ENCODE measurements at regions of chr3 and their contacts with region 1.

Region 1: DNA sequence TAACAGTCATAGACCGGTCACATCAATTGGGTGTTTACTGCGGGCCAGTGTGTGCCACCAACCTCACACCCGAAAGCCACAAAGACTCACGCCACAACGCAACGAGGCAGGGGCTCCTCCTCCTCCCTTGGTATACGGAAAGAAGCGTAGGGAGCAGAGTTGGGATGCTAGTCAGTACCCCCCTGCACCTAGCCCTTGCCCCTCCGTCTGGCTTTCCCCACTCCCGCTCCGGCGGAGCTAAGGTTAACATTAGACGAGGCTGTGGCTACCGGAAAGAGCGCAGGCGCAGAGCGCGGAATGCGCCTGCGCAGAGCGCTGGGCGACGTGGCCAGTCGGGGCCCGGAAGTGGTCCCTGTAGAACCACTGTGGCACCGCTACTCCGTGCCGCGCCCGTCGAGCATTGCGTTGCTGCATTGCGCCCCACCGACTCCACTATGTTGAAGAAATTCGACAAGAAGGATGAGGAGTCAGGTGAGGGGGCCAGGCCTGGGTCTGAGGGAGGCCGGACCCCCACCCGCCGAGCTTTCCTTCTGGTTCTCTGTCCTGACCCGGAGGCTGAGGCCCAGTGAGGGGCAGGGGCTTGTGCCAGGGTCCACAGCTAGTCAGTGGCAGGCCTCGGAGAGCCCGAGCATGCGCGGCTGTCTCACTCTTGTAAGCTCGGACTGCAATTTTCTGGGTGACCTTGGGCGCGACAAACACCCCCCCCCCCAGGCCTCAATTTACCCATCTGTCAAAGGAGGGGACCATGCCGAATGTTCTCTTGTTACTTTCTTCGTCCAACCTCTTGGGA is at the start of gene COPG1:
- DNase-seq: peak; percentile 93
- total RNA-seq, gene COPG1: 122 TPM

Region 2: DNA sequence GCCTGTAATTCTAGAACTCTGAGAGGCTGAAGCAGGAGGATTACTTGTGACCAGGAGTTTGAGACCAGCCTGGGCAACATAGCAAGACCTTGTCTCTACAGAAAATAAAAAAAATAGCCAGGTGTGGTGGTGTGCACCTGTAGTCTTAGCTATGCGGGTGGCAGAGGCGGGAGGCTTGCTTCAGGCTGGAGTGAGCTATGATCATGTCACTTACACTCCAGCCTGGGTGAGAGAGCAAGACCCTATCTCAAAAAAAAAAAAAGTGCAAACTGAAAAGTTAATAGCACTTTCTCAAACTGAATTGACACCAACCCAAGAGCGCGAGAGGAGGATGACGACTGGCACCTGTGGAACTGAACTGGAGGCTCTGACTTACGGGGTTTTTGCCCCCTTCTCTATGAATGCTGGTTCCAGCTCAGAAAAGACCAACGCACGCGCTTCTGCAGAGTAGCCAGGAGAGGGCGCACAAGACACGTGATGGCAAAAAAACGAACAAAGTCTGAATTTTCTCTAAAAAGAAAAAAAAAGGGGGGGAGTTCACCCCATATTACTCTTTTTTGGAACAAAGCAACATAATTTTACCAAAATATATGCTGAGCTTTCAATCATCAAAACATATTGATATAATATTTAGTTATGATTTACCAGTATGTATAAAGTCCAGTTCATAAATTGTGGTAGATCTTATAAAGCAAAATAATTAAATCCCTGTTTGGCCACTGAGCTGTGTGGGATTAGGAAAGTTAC is 279.3 kb before region 1 on chr3:
- intact Hi-C with region 1: loop called (anchors 2 kb)
- DNase-seq: no peak

Region 3: GRCh38 chr3:129052675-129053074 is 196.8 kb before region 1 on chr3:
- intact Hi-C with region 1: loop called (anchors 1 kb)
- DNase-seq: peak; percentile 74

Region 4: GRCh38 chr3:129160891-129161859 is 88.3 kb before region 1 on chr3 and contains the start of gene ISY1:
- intact Hi-C with region 1: loop called (anchors 1 kb)
- DNase-seq: peak; percentile 94
- total RNA-seq, gene ISY1: 23.9 TPM

Region 5: DNA sequence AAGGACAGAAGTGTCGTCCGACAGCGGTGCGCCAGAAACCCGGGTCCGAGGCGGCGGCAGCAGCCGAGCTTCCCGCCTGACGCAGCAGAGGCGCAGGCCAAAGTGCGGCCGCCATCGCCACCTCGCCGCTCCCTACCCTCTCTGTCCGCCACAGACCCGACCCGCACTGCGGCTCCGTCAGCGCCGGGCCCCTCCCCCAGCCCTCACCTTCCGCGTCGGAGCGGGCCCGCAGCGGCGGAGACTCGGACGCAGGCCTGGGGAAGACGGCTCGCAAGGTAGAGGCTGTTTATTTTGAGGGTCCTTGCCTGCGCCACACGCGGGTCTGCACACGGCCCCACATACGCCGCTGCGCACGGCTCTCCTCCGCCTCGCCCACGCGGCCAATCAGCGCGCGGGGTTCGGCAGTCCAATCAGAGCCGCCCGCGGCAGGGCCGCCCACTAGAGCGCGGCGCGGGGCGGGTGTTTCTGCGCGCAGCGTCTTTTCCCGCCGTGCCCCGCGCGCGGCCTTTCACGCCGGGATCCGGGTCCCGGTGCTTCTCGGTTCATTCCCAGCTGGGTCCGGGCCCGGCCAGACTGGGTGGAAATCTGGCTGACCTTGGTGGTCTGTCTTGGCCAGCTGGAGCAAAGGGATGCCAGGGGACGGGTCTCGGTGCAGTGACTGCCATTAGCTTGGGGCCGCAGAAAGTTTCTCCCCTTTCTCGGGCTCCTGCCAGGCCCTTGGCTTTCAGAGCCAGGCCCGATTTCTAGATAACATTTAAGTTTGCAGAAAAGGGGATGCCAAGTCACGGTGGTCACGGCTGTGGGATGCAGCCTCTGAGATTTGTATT is 65.7 kb before region 1 on chr3 and contains the start of gene CNBP:
- intact Hi-C with region 1: loop called (anchors 5 kb)
- DNase-seq: peak; percentile 96
- total RNA-seq, gene CNBP: 458 TPM

Region 6: DNA sequence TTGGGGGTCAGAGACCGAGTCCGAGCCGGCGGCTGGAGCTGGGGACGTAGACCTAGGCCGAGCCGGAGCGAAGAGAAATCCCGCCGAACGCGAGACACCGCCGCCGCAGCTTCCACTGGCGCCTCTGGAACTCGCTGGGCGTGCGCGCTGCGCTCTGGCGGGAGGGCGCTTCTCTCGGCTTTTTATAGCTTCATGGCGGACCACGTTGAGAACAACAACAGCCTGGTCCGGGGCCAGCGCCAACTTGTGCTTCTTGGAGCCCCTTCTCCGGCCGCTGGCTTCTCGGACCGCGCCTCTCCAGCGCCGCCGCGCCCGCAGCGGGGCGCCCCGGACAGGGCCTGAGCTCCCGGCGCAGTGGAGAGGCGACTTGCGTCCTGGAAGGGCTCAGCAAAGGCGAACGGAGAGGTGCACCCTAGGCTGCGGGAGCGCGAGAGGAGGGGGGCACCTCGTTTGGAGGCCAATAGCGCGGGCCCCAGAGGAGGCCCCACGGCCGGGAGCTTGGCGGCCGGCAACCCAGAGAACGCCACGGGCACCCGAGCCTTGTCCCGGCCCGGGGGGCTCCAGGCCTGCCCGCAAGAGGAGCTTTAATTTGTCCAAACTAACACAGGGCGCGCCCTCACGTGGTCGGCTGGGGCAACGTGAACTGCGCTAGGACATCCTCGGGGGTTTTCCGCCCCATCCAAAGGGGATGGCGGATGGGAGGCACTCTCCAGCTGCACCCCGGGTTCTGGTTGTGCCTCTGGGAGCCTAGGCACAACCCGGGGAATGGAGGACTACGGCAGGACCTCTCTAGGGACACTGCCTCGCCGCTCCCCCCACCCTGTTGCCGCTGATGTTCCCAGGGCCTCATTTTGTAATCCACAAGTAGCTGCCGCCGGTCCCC is 66.9 kb after region 1 on chr3:
- intact Hi-C with region 1: loop called (anchors 2 kb)
- DNase-seq: peak; percentile 92

Region 7: GRCh38 chr3:129549412-129550204 is 300.1 kb after region 1 on chr3:
- intact Hi-C with region 1: no loop called
- DNase-seq: no peak

Measured in cardiac septum (tissue), 1 donor.